ENCODE measurements at regions of chr11 and their contacts with region 1.

Region 1: DNA sequence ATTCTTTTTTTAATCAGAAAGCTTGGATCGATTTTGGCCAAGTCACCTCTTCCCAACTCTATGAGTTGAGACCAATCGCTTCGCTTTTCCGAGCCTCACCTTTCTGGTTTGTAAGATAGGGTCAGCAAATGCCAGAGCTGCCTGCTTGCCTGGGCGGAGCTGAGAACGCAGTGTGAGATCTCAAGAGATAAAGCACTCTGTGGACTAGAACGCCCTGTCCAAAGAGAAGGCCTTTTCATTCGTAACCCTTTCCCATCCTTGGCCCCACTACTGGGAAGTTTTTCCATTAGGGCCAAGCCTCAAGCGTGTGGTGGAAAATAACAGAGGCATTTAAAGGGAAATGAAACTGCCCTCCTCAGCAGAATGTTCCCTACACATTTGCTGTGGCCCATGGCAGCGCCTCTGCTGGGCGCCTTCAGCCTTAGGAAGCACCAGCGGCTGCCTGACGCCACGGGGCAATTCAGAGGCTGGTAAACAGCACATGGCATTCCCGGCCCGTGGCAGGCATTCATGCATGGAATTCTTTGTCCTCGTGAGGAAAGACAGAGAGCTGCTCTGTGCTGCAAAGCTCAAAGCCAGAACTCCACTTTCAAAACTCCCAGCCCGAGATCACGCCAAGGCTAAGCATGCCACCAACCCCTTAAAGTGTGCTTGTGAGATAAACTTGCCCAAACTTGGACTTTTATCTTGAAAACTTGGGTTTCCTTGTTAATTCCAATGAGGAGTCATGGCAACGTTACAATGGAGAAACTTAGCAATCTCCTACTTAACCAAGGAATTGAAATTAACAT is 38.1 kb downstream of the AHNAK start:
- DNase-seq: peak; percentile 88
- ATAC-seq: peak; percentile 92
- H3K4me3 ChIP-seq: peak overlapping the region; percentile 45 to 60 (median 51)
- H3K27ac ChIP-seq: peak overlapping the region; percentile 8
- H3K4me1 ChIP-seq: peaks cover 76% of the 10 kb centered on the region
- H3K27me3 ChIP-seq: peaks cover 5 to 25% of the 10 kb centered on the region in 2 experiments; a peak in 4 of 5 replicates
- CTCF ChIP-seq: peak; percentile 67
- EP300 ChIP-seq: peak in 1 of 2 experiments; percentile 14; a peak in 1 of 4 replicates
- POLR2A ChIP-seq: no peak
- RAD21 ChIP-seq: peak; percentile 85

Region 2: DNA sequence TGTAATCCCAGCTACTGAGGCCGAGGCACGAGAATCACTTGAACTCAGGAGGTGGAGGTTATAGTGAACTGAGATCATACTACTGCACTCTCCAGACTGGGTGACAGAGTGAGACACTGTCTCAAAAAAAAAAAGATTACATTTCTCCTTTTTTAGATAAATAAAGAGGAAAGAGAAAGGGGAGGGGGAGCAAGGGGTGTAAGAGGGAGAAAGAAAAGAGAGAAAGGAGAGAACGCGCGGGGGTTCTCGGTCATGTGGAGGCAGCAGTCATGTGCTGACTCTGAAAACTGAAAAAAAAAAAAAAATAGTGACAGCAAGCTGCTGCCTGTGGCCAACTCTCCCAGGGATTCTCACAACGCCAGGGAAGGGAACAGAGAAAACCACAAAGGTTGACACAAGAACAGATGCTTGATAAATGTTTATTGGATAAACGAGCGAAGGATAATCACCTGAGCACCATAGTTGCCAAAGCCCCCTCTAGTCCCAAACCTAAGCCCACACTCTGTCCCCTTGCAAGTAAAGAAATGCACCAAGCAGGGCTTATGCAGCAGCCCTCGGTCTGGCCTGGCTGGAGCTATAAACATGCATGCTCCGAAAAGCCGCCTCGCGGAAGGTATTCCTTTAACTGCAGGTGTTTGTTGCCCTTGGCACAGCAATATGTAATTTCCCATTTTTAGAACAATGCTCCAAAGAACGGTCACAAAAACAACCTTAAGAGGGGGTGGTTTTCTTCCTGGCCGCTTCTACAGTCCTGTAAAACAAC is 75.1 kb before region 1 on chr11:
- CTCF ChIA-PET with region 1: no interaction called
- POLR2A ChIA-PET with region 1: interaction called, 3 read pairs
- in situ Hi-C with region 1: no loop called
- intact Hi-C with region 1: loop called (anchors 2 kb)
- DNase-seq: no peak
- ATAC-seq: no peak; the same call in 2 of the 3 replicates
- H3K4me3 ChIP-seq: peak overlapping the region in 1 of 3 experiments; percentile 4; a peak in 1 of 6 replicates
- H3K27ac ChIP-seq: peak overlapping the region; percentile 23
- H3K4me1 ChIP-seq: peaks cover 76% of the 10 kb centered on the region
- H3K27me3 ChIP-seq: no peaks in the 10 kb centered on the region
- CTCF ChIP-seq: no peak
- EP300 ChIP-seq: no peak
- POLR2A ChIP-seq: no peak
- RAD21 ChIP-seq: no peak

Measured in HepG2 (cell line).